Heart left ventricle (tissue), 16 donors: ENCODE measurements at regions of chr1 and their contacts with region 1.

Region 1: DNA sequence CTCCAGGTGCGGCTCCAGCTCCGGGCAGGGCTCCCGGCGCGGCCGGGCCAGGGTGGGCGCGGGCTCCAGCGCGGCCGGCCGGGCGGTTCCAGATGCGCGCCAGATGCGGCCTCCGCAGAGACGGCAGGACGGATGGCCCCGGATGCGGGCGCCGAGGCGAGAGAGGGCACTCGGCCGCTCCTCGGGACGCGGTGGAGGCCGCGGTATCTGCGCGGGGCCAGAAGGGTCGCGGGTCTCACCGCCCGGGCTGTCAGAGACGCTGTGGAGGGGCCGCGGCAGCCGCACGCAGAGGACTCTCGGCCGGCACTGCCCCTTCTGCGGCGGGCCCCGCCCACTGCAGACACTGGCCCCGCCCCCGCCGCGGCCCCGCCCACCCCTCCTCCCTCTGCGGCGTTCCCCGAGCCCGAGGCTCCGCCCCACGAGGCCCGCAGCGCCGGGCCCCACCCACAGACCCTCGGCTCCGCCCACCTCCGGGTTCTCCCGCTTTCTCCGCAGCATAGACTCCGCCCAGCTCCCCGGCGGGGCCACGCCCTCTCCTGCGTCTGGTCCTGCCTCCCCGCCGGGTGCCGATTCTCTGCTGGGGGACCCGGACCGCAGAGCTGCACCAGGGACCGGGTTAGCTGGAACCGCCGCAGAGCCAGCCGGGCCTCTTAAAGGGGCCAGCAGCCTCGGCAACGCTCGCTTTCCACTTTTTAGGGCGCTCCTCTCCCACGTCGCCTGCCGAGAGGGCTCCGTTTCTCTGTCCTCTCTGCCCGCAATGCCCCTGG is at the start of gene IFFO2:
- DNase-seq: peak; percentile 98 to 99 (median 98)
- ATAC-seq: peak; percentile 98 to 99 (median 98)
- H3K4me3 ChIP-seq: peak within 1 kb of the TSS; percentile 67 to 95 (median 79)
- H3K27ac ChIP-seq: peak within 1 kb of the TSS in 11 of 12 donors; percentile 54 to 88 (median 76)
- H3K4me1 ChIP-seq: peaks cover 0 to 43% (median 28%) of the 10 kb centered on the region in 12 donors
- H3K27me3 ChIP-seq: no peaks in the 10 kb centered on the region
- CTCF ChIP-seq: no peak
- POLR2A ChIP-seq: peak; percentile 88 to 96
- total RNA-seq, gene IFFO2: 3.1 to 9.0 (median 5.3) TPM

Region 2: GRCh38 chr1:18998016-18998724 is 41.6 kb after region 1 on chr1:
- intact Hi-C with region 1: no loop called
- DNase-seq: no peak
- ATAC-seq: no peak
- H3K4me3 ChIP-seq: no peak overlapping the region
- H3K27ac ChIP-seq: no peak overlapping the region
- H3K4me1 ChIP-seq: peaks cover 0 to 11% (median 0%) of the 10 kb centered on the region in 12 donors
- H3K27me3 ChIP-seq: no peaks in the 10 kb centered on the region
- CTCF ChIP-seq: no peak
- POLR2A ChIP-seq: no peak

Region 3: GRCh38 chr1:19054216-19054615 is 97.7 kb after region 1 on chr1:
- intact Hi-C with region 1: loop called in 1 of 10 experiments (anchors 10 kb)
- DNase-seq: no peak
- ATAC-seq: peak in 2 of 4 donors; percentile 19 to 38
- H3K4me3 ChIP-seq: peak overlapping the region in 1 of 12 donors; percentile 4
- H3K27ac ChIP-seq: peak overlapping the region in 3 of 12 donors; percentile 37 to 43 (median 38)
- H3K4me1 ChIP-seq: peaks cover 0 to 12% (median 0%) of the 10 kb centered on the region in 12 donors
- H3K27me3 ChIP-seq: peaks cover 0 to 51% (median 20%) of the 10 kb centered on the region in 9 donors
- CTCF ChIP-seq: no peak
- POLR2A ChIP-seq: no peak

Region 4: GRCh38 chr1:19087737-19088594 is 131.4 kb after region 1 on chr1:
- intact Hi-C with region 1: loop called in 1 of 10 experiments (anchors 2 kb)
- DNase-seq: no peak
- ATAC-seq: no peak
- H3K4me3 ChIP-seq: no peak overlapping the region
- H3K27ac ChIP-seq: no peak overlapping the region
- H3K4me1 ChIP-seq: peaks cover 0 to 17% (median 5%) of the 10 kb centered on the region in 12 donors
- H3K27me3 ChIP-seq: no peaks in the 10 kb centered on the region
- CTCF ChIP-seq: no peak
- POLR2A ChIP-seq: no peak